ENCODE measurements at regions of chr18 and their contacts with region 1.

Region 1: DNA sequence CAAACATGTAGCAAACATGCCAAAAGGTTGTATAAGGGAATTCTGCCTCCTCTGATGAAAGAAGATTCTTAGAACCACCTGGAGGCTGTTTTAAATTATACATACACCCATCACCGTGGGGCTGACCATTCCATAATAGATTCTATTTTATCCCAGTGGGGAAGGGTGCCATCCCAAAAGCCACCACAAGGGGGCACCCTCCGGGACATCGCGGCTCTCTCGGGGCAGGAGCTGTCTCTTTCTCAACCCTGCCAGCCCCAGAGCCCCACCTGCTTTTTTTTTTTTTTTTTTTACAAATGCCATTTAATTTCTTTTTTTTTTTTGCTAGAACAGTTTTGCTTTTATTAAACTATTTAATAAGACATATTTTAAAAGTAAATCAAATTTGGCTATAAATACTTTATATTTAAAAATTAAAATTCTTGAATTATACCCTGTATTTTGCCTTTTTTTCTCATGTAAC is 8.6 kb upstream of the MTCL1 start:
- DNase-seq: no peak
- ATAC-seq: peak; percentile 95
- H3K4me3 ChIP-seq: no peak overlapping the region
- H3K27ac ChIP-seq: no peak overlapping the region
- H3K4me1 ChIP-seq: peaks cover 7% of the 10 kb centered on the region; the same call in 1 of the 2 replicates
- H3K27me3 ChIP-seq: peaks cover 0 to 3% of the 10 kb centered on the region in 2 experiments; a peak in 3 of 4 replicates
- CTCF ChIP-seq: peak; percentile 69 to 85 (median 82)
- EP300 ChIP-seq: no peak
- POLR2A ChIP-seq: no peak
- RAD21 ChIP-seq: peak; percentile 69

Region 2: DNA sequence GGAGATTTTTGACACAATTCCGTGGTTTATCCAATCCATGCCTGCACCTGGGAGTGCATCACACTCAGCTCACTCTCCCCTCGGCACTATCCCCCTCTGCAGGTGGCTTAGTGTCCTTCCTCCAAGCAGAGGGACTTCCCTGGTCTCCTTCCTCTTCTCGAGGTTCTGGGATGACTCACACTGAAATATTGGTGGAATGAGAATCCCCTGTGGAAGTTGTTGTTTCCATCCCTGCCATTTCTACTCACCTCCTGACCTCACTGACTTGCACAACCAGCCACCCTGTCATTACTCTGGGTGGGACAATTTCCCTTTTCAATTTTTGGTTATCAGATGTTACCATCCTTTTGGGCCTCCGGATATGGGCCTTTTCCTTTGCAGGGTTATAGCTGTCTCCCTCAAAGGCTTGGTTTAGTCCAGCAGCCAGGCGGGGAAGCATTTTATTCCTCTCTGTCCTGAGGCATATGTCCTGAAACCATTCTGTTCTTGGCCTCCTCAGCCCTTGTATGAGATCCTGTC is 1069.8 kb before region 1 on chr18:
- CTCF ChIA-PET with region 1: no interaction called
- POLR2A ChIA-PET with region 1: interaction called, 12 read pairs
- RAD21 ChIA-PET with region 1: no interaction called
- SMC1A ChIA-PET with region 1: no interaction called
- in situ Hi-C with region 1: no loop called
- intact Hi-C with region 1: no loop called
- DNase-seq: no peak
- ATAC-seq: no peak
- H3K4me3 ChIP-seq: no peak overlapping the region
- H3K27ac ChIP-seq: no peak overlapping the region
- H3K4me1 ChIP-seq: no peaks in the 10 kb centered on the region
- H3K27me3 ChIP-seq: no peaks in the 10 kb centered on the region; a peak in 1 of 4 replicates
- CTCF ChIP-seq: no peak
- EP300 ChIP-seq: no peak
- POLR2A ChIP-seq: no peak
- RAD21 ChIP-seq: no peak

Region 3: GRCh38 chr18:8661754-8662569 is 34.8 kb before region 1 on chr18:
- CTCF ChIA-PET with region 1: interaction called, 10 read pairs
- POLR2A ChIA-PET with region 1: no interaction called
- RAD21 ChIA-PET with region 1: interaction called, 3 read pairs
- SMC1A ChIA-PET with region 1: no interaction called
- in situ Hi-C with region 1: no loop called
- intact Hi-C with region 1: no loop called
- DNase-seq: no peak
- ATAC-seq: peak; percentile 61
- H3K4me3 ChIP-seq: no peak overlapping the region
- H3K27ac ChIP-seq: no peak overlapping the region
- H3K4me1 ChIP-seq: no peaks in the 10 kb centered on the region
- H3K27me3 ChIP-seq: no peaks in the 10 kb centered on the region; a peak in 1 of 4 replicates
- CTCF ChIP-seq: no peak
- EP300 ChIP-seq: no peak
- POLR2A ChIP-seq: no peak
- RAD21 ChIP-seq: no peak

Region 4: DNA sequence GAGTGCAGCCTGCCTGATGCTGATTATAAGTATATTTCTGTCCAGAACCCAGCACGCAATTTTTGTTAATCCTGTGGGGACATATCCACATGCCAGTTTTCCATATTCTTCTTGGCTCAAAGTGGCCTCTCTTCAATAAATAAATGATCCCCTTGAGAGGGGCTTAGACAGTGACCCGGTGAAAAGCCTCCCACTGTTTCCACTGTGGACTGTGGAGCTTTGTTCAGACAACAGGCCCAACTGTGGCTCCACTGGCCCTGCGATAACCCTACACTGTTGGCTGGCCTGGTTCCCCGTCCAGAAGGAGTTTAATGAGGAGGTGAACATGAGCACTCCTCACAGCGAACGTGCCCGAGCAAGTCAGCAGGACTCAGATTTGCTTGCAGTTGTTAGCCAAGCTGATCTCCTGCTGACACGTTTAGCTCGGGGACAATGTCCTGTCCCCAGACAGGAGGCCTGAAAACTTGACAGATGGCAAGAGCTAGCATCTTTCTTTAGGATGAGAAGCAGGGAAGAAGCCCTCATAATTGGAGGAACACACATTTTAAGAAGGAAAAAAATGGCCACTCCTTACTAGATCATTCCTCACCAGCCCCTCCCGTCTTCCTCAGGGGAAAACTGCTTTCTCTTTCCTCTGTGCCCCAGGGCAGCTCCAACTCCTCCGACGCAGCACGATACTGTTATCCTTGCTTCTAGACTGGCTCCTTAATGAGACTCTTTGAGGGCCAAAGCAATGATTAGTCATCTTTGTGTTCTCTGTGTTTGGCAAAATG is 11.5 kb before region 1 on chr18:
- CTCF ChIA-PET with region 1: interaction called, 12 read pairs
- POLR2A ChIA-PET with region 1: no interaction called
- RAD21 ChIA-PET with region 1: interaction called, 4 read pairs
- SMC1A ChIA-PET with region 1: no interaction called
- in situ Hi-C with region 1: no loop called
- intact Hi-C with region 1: no loop called
- DNase-seq: no peak
- ATAC-seq: no peak
- H3K4me3 ChIP-seq: no peak overlapping the region
- H3K27ac ChIP-seq: no peak overlapping the region
- H3K4me1 ChIP-seq: no peaks in the 10 kb centered on the region
- H3K27me3 ChIP-seq: peaks cover 0 to 2% of the 10 kb centered on the region in 2 experiments; a peak in 3 of 4 replicates
- CTCF ChIP-seq: no peak
- EP300 ChIP-seq: no peak
- POLR2A ChIP-seq: no peak
- RAD21 ChIP-seq: no peak

Region 5: DNA sequence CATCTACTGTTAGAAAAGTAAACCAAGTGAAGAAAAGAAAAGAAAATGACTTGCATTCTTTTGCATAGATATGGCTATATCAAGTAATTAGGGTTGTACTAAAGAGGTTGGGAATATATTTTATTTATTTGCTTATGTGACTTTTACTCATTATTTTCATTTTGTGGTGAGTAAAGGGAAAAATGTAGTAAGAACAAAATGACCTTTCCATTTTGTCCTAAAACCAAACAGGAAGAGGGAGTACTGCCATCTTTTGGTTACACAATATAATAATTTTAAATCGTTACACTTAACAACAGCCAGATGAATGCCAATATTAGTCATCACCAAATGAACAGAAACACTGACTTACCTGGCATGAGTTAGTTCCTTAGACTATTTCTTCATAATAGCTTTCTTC is 358.4 kb after region 1 on chr18:
- CTCF ChIA-PET with region 1: interaction called, 11 read pairs
- POLR2A ChIA-PET with region 1: no interaction called
- RAD21 ChIA-PET with region 1: no interaction called
- SMC1A ChIA-PET with region 1: interaction called, 3 read pairs
- in situ Hi-C with region 1: no loop called
- intact Hi-C with region 1: loop called (anchors 5 kb)
- DNase-seq: no peak
- ATAC-seq: peak; percentile 89
- H3K4me3 ChIP-seq: no peak overlapping the region
- H3K27ac ChIP-seq: no peak overlapping the region
- H3K4me1 ChIP-seq: peaks cover 2% of the 10 kb centered on the region; the same call in 1 of the 2 replicates
- H3K27me3 ChIP-seq: no peaks in the 10 kb centered on the region
- CTCF ChIP-seq: peak in 2 of 3 experiments; percentile 18 to 43; a peak in 1 of 6 replicates
- EP300 ChIP-seq: no peak
- POLR2A ChIP-seq: no peak
- RAD21 ChIP-seq: peak; percentile 40